GM10248 (cell line): ENCODE measurements at regions of chr14 and their contacts with region 1.

Region 1: GRCh38 chr14:52935833-52936232 is 15.0 kb downstream of the FERMT2 start:
- DNase-seq: no peak
- CTCF ChIP-seq: no peak

Region 2: GRCh38 chr14:52325126-52325525 is 610.7 kb before region 1 on chr14:
- CTCF ChIA-PET with region 1: no interaction called
- POLR2A ChIA-PET with region 1: no interaction called
- DNase-seq: peak; percentile 72
- CTCF ChIP-seq: no peak

Region 3: GRCh38 chr14:52923902-52924575 is 11.8 kb before region 1 on chr14:
- CTCF ChIA-PET with region 1: interaction called, 12 read pairs
- POLR2A ChIA-PET with region 1: no interaction called
- DNase-seq: no peak
- CTCF ChIP-seq: peak; percentile 44